A673 (cell line): ENCODE measurements at regions of chr12 and their contacts with region 1.

Region 1: GRCh38 chr12:2284857-2285256 is 232.1 kb downstream of the CACNA1C start:
- DNase-seq: no peak
- H3K4me3 ChIP-seq: no peak overlapping the region
- H3K27ac ChIP-seq: peak overlapping the region; percentile 94
- H3K4me1 ChIP-seq: peaks cover 75% of the 10 kb centered on the region
- H3K27me3 ChIP-seq: no peaks in the 10 kb centered on the region
- CTCF ChIP-seq: peak; percentile 96

Region 2: DNA sequence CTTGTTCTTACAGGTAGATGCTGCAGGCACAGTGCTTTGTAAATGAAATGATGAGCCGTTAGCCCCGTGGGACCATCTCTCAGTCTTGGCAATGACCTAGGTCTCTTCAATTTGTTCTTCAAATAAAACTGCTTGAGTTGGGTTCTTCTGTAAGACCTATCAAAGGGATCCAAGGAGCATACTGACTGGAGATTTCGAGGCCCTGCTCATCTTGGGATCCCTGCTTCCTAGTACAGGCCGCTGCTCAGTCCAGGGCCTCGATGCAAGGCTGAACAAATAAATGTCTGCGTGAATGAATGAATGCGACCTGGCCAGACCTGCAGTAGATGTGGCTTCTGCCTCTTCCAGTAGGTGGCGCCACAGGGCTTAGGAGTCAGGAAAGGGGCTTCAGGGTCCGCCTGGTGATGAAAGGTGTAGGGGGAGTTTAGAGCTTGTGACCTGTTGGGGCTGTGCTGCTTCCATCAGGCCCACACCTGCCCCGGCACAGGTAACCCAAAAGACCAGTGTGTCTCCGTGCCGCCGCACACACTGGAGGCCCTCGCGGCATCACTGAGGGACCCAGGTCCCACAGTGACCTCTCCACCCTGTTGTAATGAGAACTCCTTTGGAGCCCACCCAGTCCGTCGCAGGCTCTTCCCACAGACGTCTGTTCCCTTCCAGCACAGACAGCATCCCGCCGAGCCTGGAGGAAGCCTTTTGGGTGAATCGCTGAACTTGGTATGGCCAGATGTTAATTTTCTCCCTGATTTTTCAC is 227.6 kb before region 1 on chr12:
- CTCF ChIA-PET with region 1: interaction called, 4 read pairs
- POLR2A ChIA-PET with region 1: interaction called, 8 read pairs
- intact Hi-C with region 1: loop called (anchors 1 kb)
- DNase-seq: peak; percentile 82
- H3K4me3 ChIP-seq: no peak overlapping the region
- H3K27ac ChIP-seq: no peak overlapping the region
- H3K4me1 ChIP-seq: peaks cover 12% of the 10 kb centered on the region
- H3K27me3 ChIP-seq: peaks cover 24% of the 10 kb centered on the region
- CTCF ChIP-seq: peak; percentile 96

Region 3: DNA sequence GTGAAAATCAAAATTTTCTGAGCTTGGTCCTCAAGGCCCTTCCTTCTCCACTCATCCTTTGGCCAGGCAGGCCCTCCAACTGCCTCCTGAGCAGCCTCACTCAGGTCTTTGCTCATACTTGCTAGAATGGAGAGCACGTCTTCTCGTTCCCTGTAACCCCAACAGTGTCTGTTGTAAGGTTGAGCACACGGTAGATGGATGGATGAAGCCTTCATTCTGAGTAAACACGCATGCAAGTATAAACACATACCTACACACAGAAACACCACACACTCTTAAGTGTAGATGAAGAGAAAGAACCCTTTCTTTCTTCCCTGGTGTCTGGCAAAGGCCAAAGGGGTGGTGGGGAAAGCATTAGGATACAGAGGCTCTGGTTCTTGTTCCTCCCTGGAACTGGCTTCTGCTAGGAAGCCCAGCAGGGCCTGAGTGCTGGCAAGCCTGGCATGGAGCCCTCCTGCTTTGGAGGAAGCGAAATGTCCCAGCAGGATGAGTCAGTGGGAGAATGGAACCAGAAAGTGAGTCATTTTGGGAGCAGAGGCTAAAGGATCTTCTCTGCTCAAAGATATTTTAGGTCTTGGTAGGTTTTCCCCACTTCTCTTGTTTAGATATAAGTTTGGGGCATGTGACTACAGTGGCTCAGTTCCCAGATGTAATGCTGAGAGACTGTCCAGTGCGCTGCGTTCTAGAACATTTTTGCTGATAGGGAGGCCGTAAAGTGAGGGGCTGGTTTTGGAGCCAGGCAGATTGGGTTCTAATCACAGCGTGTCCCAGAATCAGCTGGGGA is 104.7 kb before region 1 on chr12:
- CTCF ChIA-PET with region 1: no interaction called
- POLR2A ChIA-PET with region 1: no interaction called
- intact Hi-C with region 1: no loop called
- DNase-seq: peak; percentile 52
- H3K4me3 ChIP-seq: no peak overlapping the region
- H3K27ac ChIP-seq: no peak overlapping the region
- H3K4me1 ChIP-seq: peaks cover 3% of the 10 kb centered on the region
- H3K27me3 ChIP-seq: no peaks in the 10 kb centered on the region
- CTCF ChIP-seq: no peak

Region 4: DNA sequence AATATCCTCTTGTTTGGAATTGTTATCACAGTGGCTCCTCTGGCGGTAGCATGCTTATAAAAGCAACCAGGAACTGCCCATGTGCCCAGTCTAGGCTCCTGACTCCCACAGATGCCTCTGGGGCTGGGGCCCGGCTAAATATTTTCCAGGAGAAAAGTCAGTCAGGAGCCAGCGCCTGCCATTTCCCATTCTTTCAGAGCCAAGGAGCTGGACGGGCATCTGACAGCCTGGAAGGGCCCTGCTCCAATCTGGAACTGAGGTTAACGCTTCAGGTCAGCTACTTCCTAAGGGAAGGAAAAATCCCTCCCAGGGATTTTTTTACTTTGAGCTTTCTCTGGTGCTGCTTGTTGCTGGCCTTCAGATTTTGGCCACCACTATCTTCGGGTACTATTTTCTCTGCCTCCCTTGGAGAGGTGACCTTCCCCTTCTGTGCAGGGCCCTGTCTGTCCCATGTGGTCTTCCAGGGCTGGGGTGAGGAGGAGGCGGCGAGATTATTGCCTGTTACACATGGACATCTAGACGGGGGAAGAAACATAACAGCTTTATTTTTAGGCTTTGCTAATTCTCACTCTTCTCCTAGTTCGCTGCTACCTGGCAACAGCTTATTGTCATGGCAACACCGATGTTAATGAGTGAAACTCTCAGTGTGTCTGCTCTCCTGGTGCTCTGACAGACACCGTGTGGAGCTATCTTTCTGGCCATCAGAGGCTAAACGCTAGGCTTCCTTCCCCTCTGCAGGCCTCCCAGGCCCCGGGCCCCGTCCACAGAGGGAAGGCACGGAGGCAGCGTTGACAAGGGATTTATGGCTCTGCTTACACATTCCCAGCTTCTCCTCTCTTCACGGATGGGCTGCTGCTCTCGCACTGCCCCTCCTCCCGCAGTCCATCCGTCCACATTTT is 71.6 kb before region 1 on chr12:
- CTCF ChIA-PET with region 1: no interaction called
- POLR2A ChIA-PET with region 1: interaction called, 10 read pairs
- intact Hi-C with region 1: no loop called
- DNase-seq: no peak
- H3K4me3 ChIP-seq: no peak overlapping the region
- H3K27ac ChIP-seq: no peak overlapping the region
- H3K4me1 ChIP-seq: no peaks in the 10 kb centered on the region
- H3K27me3 ChIP-seq: no peaks in the 10 kb centered on the region
- CTCF ChIP-seq: no peak

Region 5: GRCh38 chr12:2354151-2354991 is 69.5 kb after region 1 on chr12:
- CTCF ChIA-PET with region 1: no interaction called
- POLR2A ChIA-PET with region 1: no interaction called
- intact Hi-C with region 1: no loop called
- DNase-seq: no peak
- H3K4me3 ChIP-seq: no peak overlapping the region
- H3K27ac ChIP-seq: no peak overlapping the region
- H3K4me1 ChIP-seq: peaks cover 16% of the 10 kb centered on the region
- H3K27me3 ChIP-seq: no peaks in the 10 kb centered on the region
- CTCF ChIP-seq: no peak